Lower leg skin (tissue), 4 donors: ENCODE measurements at regions of chr11 and their contacts with region 1.

Region 1: DNA sequence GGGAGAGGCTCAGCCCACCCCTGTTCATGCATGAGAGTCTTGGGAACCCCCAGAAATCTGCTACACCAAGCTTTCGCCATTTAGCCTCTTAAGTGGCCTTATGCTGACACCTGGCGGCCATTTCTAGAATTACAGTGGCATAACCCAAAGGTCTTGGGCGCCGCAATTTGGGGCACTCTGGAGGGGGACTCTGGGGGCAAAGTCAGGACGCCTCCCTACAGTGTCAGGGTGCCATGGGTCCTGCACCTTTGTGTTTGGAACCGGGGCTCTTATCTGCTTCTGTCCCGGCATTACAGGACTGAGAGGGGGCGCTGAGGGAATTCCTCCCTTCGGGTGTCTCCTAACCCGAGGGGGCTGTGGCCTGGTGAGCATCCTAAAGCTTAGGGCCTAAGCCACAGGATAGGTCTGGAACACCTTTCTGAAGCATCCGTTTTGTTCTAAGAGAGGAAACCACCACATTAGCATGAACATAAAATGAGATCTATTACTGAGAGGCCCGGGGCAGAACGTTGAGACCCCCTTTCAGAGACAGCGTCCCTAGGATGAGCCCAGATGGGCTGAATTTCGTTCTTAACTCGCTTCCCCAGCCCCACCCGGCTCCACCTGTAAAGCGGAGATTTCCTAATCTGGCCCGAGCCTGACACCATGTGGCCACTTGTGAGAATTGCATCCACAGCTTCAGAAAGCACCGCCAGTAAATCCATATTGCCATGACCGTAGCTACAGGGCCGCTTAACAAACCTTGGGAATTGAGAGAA is 9.3 kb downstream of the INS start:
- DNase-seq: peak; percentile 71 to 96
- H3K4me3 ChIP-seq: no peak overlapping the region
- CTCF ChIP-seq: peak in 1 of 3 donors; percentile 83
- POLR2A ChIP-seq: no peak

Region 2: GRCh38 chr11:1652771-1653540 is 498.7 kb before region 1 on chr11:
- intact Hi-C with region 1: loop called (anchors 10 kb)
- DNase-seq: peak; percentile 61 to 94
- H3K4me3 ChIP-seq: no peak overlapping the region
- CTCF ChIP-seq: peak in 1 of 3 donors; percentile 88
- POLR2A ChIP-seq: no peak